K562 (cell line): ENCODE measurements at regions of chr21 and their contacts with region 1.

Region 1: GRCh38 chr21:31855150-31855549 is 17.7 kb upstream of the HUNK start:
- DNase-seq: no peak
- ATAC-seq: no peak
- H3K4me3 ChIP-seq: no peak overlapping the region
- H3K27ac ChIP-seq: no peak overlapping the region
- H3K4me1 ChIP-seq: no peaks in the 10 kb centered on the region
- H3K27me3 ChIP-seq: peaks cover 4 to 8% of the 10 kb centered on the region in 2 experiments; a peak in 4 of 5 replicates
- CTCF ChIP-seq: no peak
- EP300 ChIP-seq: no peak
- POLR2A ChIP-seq: no peak
- RAD21 ChIP-seq: no peak

Region 2: GRCh38 chr21:31781737-31782136 is 73.4 kb before region 1 on chr21:
- CTCF ChIA-PET with region 1: no interaction called
- POLR2A ChIA-PET with region 1: no interaction called
- in situ Hi-C with region 1: no loop called
- intact Hi-C with region 1: loop called (anchors 10 kb)
- DNase-seq: peak in 1 of 4 experiments; percentile 43
- ATAC-seq: 0 out of 3 replicates have a peak, but pooled peaks have one; percentile 11
- H3K4me3 ChIP-seq: no peak overlapping the region
- H3K27ac ChIP-seq: no peak overlapping the region
- H3K4me1 ChIP-seq: 0 out of 5 replicates have a peak, but pooled peaks cover 0 to 4% of the 10 kb centered on the region in 2 experiments
- H3K27me3 ChIP-seq: peaks cover 6 to 10% of the 10 kb centered on the region in 2 experiments; a peak in 1 of 5 replicates
- CTCF ChIP-seq: no peak
- EP300 ChIP-seq: no peak
- POLR2A ChIP-seq: no peak
- RAD21 ChIP-seq: no peak

Region 3: GRCh38 chr21:31908106-31909031 is 53.2 kb after region 1 on chr21:
- CTCF ChIA-PET with region 1: no interaction called
- POLR2A ChIA-PET with region 1: no interaction called
- in situ Hi-C with region 1: no loop called
- intact Hi-C with region 1: no loop called
- DNase-seq: no peak
- ATAC-seq: no peak; the same call in 2 of the 3 replicates
- H3K4me3 ChIP-seq: no peak overlapping the region
- H3K27ac ChIP-seq: no peak overlapping the region
- H3K4me1 ChIP-seq: no peaks in the 10 kb centered on the region
- H3K27me3 ChIP-seq: peaks cover 52 to 69% of the 10 kb centered on the region in 2 experiments
- CTCF ChIP-seq: no peak
- EP300 ChIP-seq: no peak
- POLR2A ChIP-seq: no peak
- RAD21 ChIP-seq: no peak